Dorsolateral prefrontal cortex (tissue), 120 donors: ENCODE measurements at regions of chr3 and their contacts with region 1.

Region 1: DNA sequence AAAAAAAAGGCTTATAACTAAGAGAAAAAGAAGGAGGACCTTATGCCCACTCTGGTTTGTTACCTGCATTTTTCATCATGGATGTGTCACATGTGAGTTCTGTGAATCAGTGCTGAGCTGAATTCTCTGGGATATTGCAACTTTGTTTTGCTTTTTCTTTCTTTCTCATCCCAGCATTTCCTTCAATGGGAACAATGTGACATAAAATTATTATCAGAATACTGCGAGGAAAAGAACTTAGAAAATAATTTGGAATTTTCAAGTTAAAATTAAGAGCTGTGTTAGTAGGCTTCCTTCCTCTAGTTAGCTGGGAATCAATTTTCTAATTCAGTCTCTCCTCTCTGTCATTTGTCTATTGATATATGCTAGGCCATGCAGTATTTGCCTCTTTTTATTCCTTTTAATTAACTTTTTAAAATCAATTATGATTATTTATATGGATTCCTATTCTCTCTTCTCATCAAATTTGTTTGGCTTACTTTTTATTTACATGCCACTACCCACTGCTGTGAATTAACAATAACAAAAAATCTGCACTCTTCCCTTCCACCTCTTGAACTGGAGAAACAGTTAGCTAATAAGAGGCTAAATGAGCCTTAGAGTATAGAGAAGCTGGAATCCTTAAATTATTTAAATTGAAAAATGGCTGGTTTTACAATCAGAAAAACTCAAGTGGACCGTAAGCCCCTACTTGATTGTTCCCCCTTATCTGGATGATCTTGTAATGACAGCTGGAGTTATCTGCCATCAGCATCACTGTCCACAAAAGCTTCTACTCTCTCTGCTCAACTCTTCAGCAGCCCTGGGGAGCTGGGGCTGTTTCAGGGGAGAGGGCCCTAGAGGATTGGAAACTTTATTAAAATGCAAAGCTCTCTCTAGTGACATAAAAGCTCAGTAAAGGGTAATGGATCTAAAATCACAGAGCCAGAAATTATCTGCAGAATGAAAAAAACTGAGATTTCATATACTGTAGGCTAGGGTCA is 95.3 kb upstream of the SOX2 start:
- DNase-seq: no peak
- H3K4me3 ChIP-seq: peak overlapping the region in 32 of 59 donors; percentile 3 to 66 (median 22)
- H3K27ac ChIP-seq: peak overlapping the region; percentile 32 to 95 (median 83)
- H3K27me3 ChIP-seq: no peaks in the 10 kb centered on the region
- CTCF ChIP-seq: peak in 2 of 56 donors; percentile 4

Region 2: GRCh38 chr3:181694805-181695660 is 78.7 kb after region 1 on chr3:
- intact Hi-C with region 1: loop called (anchors 5 kb)
- DNase-seq: peak in 4 of 10 donors; percentile 31 to 62 (median 56)
- H3K4me3 ChIP-seq: peak overlapping the region in 58 of 59 donors; percentile 2 to 93 (median 62)
- H3K27ac ChIP-seq: peak overlapping the region; percentile 77 to 100 (median 98)
- H3K27me3 ChIP-seq: peaks cover 0 to 40% (median 7%) of the 10 kb centered on the region in 45 donors
- CTCF ChIP-seq: peak in 14 of 56 donors; percentile 8 to 41 (median 14)